ENCODE measurements at regions of chr20 and their contacts with region 1.

Region 1: DNA sequence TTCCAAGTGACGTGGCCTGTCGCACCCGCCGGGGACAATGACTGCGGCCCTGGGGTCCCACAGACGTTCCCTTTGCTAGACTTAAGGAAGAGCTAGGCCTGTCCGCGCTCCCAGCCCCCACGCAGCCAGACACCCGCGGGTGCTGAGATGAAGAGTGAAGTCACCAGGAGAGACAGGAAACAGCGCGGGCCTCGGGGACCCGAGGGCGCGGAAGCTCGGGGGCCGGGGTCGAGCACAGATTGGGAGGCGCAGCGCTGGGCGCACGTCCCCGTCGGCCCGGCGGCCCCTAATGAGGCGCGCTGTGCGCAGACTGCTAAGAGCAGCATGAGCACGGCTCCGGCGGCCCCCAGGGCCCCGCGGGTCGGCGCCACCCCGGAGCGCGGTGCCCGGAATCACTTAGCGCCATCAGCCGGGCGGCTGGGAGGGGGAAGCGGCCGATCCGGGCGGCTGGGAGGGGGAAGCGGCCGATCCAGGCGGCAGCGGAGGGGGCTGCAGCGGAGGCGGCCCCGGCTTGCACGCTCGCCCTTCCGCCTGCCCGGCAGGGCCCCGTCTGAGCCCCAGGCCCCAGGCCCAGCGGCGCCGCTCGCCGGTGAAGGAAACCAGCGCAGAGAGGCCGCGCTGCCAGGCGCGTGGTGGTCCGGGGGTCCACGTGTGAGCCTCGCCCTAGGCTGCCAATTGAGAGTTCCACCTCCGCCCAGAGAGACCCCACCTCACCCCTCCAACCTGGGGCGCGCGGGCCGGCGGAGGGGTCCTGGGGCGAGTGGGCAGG is 8.3 kb upstream of the AVP start:
- DNase-seq: peak; percentile 35 to 82 (median 60)
- ATAC-seq: peak; percentile 23 to 54
- H3K4me3 Mint-ChIP-seq: peak overlapping the region; percentile 80 to 99 (median 94)
- H3K27ac Mint-ChIP-seq: peak overlapping the region; percentile 93 to 100 (median 100)
- H3K4me1 Mint-ChIP-seq: peaks cover 22 to 44% (median 41%) of the 10 kb centered on the region in 4 donors
- H3K27me3 Mint-ChIP-seq: peaks cover 0 to 8% (median 0%) of the 10 kb centered on the region in 5 donors

Region 2: GRCh38 chr20:2983508-2983907 is 109.3 kb before region 1 on chr20:
- POLR2A ChIA-PET with region 1: no interaction called
- DNase-seq: no peak
- ATAC-seq: no peak
- H3K4me3 Mint-ChIP-seq: no peak overlapping the region
- H3K27ac Mint-ChIP-seq: no peak overlapping the region
- H3K4me1 Mint-ChIP-seq: peaks cover 0 to 11% (median 8%) of the 10 kb centered on the region in 4 donors
- H3K27me3 Mint-ChIP-seq: no peaks in the 10 kb centered on the region

Region 3: DNA sequence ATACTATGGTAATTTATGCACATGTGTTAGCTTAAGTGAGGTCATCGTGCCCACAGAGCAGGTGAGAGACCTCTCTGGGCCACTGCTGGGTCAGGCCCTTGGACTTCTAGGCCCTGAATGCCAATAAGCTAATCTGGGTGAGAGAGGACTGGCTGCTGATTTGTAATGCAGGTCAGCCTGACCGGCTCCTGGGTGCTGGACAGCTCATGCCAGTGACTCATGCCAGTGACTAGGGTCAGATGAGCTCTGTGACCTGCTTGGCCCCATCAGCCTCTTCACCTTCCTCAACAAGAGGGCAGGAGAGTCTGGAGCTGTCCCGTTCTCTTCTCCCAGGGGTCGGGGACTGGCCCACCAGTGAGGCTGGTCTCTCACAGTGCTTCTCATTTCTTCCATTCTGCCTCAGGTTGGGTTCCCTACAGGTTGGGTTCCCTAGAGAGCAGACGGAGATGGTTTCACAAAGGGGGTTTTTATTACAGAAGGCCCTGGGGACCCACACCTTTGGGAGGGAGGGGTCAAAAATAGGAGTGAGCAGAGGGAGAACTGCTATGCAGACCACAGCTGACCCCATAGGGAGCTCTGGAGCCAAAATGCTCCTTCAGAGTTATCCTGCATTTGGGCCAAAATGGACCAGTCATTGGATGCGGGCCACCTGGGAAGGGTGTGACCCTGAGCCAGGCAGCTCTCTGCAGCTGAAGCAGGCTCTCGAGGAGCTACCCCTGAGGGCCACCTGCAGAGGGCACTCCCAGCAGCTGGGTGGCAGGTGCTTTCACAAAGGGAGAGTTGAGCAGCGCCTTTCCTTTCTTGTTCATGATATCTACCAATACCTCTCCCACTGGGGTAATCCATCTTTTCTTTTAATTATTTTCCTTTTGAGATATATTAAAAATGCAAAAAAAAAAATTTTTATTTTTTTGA is 23.6 kb before region 1 on chr20:
- POLR2A ChIA-PET with region 1: interaction called, 63 read pairs
- DNase-seq: peak; percentile 30 to 83 (median 54)
- ATAC-seq: peak; percentile 49 to 67
- H3K4me3 Mint-ChIP-seq: peak overlapping the region in 1 of 10 donors; percentile 20
- H3K27ac Mint-ChIP-seq: peak overlapping the region in 2 of 10 donors; percentile 52 to 76
- H3K4me1 Mint-ChIP-seq: peaks cover 11 to 36% (median 19%) of the 10 kb centered on the region in 4 donors
- H3K27me3 Mint-ChIP-seq: no peaks in the 10 kb centered on the region

Region 4: GRCh38 chr20:3082306-3082951 is 10.4 kb before region 1 on chr20:
- POLR2A ChIA-PET with region 1: interaction called, 46 read pairs
- DNase-seq: no peak
- ATAC-seq: peak; percentile 51 to 63
- H3K4me3 Mint-ChIP-seq: peak overlapping the region; percentile 49 to 82 (median 70)
- H3K27ac Mint-ChIP-seq: peak overlapping the region in 4 of 10 donors; percentile 1 to 85 (median 54)
- H3K4me1 Mint-ChIP-seq: peaks cover 11 to 21% (median 18%) of the 10 kb centered on the region in 4 donors
- H3K27me3 Mint-ChIP-seq: peaks cover 2 to 44% (median 21%) of the 10 kb centered on the region in 5 donors

Region 5: DNA sequence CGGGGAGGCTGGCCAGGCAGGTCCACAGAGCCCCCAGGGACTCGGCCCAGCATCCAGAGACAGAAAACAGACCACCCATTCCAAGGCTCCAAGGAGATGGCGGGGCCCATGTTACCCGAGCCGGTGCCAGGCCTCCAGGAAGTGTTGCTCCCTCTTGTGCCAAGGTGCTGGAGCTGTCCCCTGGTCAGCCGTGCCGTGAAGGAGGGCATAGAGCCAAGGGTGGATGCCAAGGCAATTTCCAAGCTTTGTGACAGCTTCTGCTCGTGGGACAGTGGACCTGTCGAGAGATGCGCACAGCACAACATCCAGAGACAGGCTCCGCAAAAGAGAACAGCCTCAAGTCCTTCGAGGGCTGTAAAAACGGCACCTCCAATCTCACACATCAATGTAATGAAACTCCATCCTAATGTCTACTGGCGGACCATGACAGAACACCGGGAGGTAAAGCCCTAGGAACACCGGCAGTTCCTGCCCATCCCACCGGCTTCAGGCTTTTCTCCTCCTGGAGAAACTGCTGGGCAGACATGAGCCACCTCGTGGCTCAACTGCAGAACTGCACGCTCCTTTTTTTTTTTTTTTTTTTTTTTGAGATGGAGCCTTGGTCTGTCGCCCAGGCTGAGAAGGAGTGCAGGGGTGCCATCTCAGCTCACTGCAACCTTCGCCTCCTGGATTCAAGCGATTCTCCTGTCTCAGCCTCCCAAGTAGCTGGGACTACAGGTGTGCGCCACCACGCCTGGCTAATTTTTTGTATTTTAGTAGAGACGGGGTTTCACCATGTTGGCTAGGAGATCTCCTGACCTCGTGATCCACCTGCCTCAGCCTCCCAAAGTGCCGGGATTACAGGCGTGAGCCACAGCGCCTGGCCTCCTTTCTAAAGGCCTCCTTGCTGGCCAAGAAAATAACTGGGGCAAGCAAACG is 22.7 kb after region 1 on chr20:
- POLR2A ChIA-PET with region 1: interaction called, 38 read pairs
- DNase-seq: peak in 6 of 10 donors; percentile 10 to 59 (median 40)
- ATAC-seq: peak; percentile 47 to 68
- H3K4me3 Mint-ChIP-seq: peak overlapping the region in 1 of 10 donors; percentile 2
- H3K27ac Mint-ChIP-seq: peak overlapping the region in 7 of 10 donors; percentile 52 to 93 (median 71)
- H3K4me1 Mint-ChIP-seq: peaks cover 12 to 40% (median 16%) of the 10 kb centered on the region in 4 donors
- H3K27me3 Mint-ChIP-seq: no peaks in the 10 kb centered on the region

Region 6: DNA sequence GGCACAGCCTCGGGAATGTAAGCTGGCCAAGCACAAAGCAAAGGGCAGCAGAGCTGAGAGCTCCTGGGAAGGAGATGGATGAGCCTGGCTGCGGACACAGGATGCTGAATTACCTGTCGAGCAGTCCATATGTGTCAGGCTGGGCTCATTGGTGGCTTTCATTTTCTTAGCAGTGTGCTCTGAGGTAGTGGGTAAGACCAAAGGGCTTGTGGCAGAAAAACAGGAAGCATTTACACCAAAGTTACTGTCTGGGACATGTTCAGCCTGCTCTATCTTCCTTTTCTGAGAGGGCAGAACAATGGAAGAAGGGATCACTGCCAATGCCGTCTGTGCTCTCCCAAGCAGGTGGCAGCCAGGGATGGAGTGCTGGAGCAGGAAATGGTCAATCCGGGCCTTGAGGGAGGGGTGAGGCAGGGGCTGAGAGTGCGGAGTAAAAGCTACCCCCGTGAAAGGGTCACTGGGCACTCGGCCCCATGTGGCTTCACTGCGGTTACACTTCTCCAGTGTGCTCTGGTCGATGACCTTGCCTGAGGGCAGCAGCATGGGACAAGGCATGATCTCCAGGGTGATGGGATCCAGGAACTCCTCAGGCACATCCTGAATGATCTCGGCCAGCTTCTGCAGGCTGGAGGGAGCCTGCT is 28.6 kb after region 1 on chr20:
- POLR2A ChIA-PET with region 1: interaction called, 38 read pairs
- DNase-seq: peak in 8 of 10 donors; percentile 20 to 73 (median 54)
- ATAC-seq: peak; percentile 88 to 91
- H3K4me3 Mint-ChIP-seq: peak overlapping the region; percentile 60 to 89 (median 86)
- H3K27ac Mint-ChIP-seq: peak overlapping the region; percentile 97 to 100 (median 99)
- H3K4me1 Mint-ChIP-seq: peaks cover 22 to 60% (median 39%) of the 10 kb centered on the region in 4 donors
- H3K27me3 Mint-ChIP-seq: no peaks in the 10 kb centered on the region

Region 7: DNA sequence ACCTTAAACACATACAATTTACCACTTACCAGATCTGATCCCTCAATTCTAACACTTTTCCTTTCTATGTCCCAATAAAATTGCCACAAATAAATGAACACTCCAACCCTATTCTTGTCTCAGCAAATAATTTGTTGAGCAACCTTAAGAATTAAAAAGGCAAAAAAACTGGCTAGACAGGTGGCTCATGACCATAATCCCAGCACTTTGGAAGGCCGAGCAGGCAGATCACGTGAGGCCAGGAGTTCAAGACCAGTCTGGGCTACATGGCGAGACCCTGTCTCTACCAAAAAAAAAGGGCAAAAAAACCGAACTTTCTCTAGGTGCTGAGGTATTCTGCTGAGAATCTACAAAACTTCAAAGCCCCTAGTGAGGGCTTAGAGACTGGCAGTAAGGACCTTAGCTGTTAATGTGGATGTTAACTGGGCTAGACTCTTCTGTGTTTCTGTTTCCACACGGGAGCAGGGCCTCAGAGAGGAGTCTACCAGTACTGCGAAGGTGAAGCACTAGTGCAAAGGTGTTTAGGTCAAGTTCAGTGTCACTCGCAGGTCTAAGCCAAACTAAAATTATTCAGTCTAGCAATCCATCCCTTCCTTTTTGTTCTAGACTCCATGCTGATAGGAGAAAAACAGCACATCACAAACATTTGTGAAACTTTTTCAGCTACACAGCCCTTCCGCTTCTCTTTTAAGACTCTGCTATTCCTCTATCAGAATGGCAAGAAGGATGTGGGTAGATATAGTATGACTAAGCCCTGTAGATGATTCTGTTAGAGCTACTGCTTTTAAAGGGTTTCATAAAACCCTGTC is 64.2 kb after region 1 on chr20:
- POLR2A ChIA-PET with region 1: interaction called, 17 read pairs
- DNase-seq: peak in 3 of 10 donors; percentile 31 to 62 (median 53)
- ATAC-seq: peak; percentile 79 to 83
- H3K4me3 Mint-ChIP-seq: peak overlapping the region; percentile 66 to 99 (median 69)
- H3K27ac Mint-ChIP-seq: peak overlapping the region; percentile 59 to 98 (median 88)
- H3K4me1 Mint-ChIP-seq: peaks cover 36 to 73% (median 69%) of the 10 kb centered on the region in 4 donors
- H3K27me3 Mint-ChIP-seq: no peaks in the 10 kb centered on the region

Measured in naive thymus-derived CD8-positive, alpha-beta T cell (primary cell).